ENCODE measurements at regions of chr6 and their contacts with region 1.

Region 1: GRCh38 chr6:88616380-88616779 is 347.0 kb downstream of the RNGTT start:
- DNase-seq: peak; percentile 97
- H3K4me3 ChIP-seq: peak overlapping the region; percentile 63
- H3K27ac ChIP-seq: peak overlapping the region; percentile 95
- H3K4me1 ChIP-seq: peaks cover 88% of the 10 kb centered on the region
- CTCF ChIP-seq: no peak; the same call in 1 of the 2 replicates

Region 2: GRCh38 chr6:87701676-87702588 is 914.4 kb before region 1 on chr6 and contains the start of gene AKIRIN2:
- CTCF ChIA-PET with region 1: no interaction called
- POLR2A ChIA-PET with region 1: interaction called, 6 read pairs
- intact Hi-C with region 1: loop called (anchors 5 kb)
- DNase-seq: peak; percentile 100
- H3K4me3 ChIP-seq: peak within 1 kb of the TSS; percentile 94
- H3K27ac ChIP-seq: peak within 1 kb of the TSS; percentile 89
- H3K4me1 ChIP-seq: peaks cover 50% of the 10 kb centered on the region
- CTCF ChIP-seq: no peak
- total RNA-seq, gene AKIRIN2: 70.3 and 70.4 TPM in 2 replicates

Region 3: DNA sequence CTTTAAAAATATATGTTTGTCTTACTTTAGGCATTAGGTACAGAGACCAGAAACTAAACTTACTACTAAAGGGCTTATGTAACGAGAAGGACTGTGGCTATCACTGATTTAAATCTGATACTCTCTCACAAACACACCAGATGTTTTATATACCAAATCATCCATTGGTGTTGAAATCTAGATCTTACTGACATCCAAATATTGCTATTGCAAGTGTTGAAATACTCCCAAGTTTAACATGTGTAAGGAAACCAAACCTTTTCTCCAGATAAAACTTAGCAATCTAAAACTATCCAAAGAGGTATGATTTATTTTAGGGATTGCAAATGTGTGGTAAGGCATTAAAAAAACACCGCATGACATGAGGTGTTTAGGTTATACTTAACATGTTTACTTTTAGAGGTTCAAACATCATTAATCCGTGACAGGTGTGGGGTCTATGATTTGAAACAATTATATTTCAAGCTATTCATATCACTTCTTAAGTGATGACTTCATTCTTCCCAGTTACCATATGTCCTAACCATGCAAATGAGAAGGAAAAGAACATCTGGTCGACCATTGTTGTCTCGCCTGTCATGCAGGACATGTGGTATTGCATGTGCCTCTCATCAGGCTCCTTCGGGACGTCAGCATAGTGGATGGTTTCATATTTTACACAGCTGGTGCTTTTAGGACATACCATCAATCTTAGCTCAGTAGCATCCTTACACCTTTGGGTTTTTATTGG is 737.1 kb before region 1 on chr6:
- CTCF ChIA-PET with region 1: no interaction called
- POLR2A ChIA-PET with region 1: interaction called, 23 read pairs
- intact Hi-C with region 1: loop called (anchors 1 kb)
- DNase-seq: peak; percentile 100
- H3K4me3 ChIP-seq: peak overlapping the region; percentile 11
- H3K27ac ChIP-seq: peak overlapping the region; percentile 99
- H3K4me1 ChIP-seq: peaks cover 78% of the 10 kb centered on the region
- CTCF ChIP-seq: no peak

Region 4: DNA sequence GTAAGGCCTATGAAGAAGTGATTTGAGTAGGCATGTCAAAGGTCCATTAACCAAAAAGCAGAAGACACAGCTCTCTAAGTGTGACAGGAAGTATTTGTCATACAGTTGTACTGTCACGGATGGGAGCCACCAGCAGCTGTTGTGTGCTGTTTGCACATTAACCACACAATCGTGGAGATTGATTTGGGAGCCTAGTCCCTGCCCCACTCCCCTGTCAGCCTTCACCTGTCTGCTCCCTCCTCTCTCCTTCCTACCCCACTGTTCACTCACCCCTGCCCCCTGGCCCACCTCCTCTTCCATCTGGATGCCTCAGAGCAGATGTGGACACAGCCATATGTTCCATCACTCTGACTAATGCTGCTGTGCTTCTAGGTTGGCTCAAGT is 693.4 kb before region 1 on chr6:
- CTCF ChIA-PET with region 1: no interaction called
- POLR2A ChIA-PET with region 1: interaction called, 50 read pairs
- intact Hi-C with region 1: loop called (anchors 1 kb)
- DNase-seq: peak; percentile 98
- H3K4me3 ChIP-seq: peak overlapping the region; percentile 31
- H3K27ac ChIP-seq: peak overlapping the region; percentile 99
- H3K4me1 ChIP-seq: peaks cover 99% of the 10 kb centered on the region
- CTCF ChIP-seq: no peak

Region 5: GRCh38 chr6:88499845-88500699 is 116.3 kb before region 1 on chr6:
- CTCF ChIA-PET with region 1: no interaction called
- POLR2A ChIA-PET with region 1: interaction called, 5 read pairs
- intact Hi-C with region 1: loop called (anchors 2 kb)
- DNase-seq: peak; percentile 87
- H3K4me3 ChIP-seq: peak overlapping the region; percentile 33
- H3K27ac ChIP-seq: peak overlapping the region; percentile 89
- H3K4me1 ChIP-seq: peaks cover 32% of the 10 kb centered on the region
- CTCF ChIP-seq: no peak

Region 6: DNA sequence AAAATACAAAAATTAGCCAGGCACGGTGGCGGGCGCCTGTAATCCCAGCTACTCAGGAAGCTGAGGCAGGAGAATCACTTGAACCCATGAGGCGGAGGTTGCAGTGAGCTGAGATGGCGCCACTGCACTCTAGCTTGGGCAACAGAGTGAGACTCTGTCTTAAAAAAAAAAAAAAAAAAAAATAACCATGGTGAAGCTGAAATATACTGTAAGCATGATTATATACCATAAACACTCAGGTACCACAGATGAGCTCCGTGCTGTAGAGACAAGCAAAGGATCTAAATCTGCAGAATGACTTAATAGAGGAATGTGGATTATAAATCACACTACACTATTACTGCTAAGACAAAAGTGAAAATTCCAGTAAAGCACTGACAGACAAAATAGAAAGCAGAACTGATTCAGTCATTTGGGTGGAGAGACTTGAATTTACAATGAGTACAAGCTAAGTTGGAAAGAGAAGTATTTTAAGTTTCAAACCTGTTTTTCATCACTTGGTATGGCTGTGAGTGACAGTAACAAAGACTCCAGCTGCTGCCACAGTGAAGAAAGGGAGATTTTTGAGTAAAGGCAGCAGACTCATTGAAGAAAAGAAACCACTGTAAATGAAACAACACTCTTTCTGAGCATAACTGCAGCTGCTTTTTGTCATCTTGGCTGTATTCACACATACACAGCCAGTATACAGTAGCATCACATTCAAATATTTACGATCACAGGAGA is 25.0 kb after region 1 on chr6:
- CTCF ChIA-PET with region 1: no interaction called
- POLR2A ChIA-PET with region 1: interaction called, 28 read pairs
- intact Hi-C with region 1: no loop called
- DNase-seq: peak; percentile 64
- H3K4me3 ChIP-seq: peak overlapping the region; percentile 44
- H3K27ac ChIP-seq: peak overlapping the region; percentile 65
- H3K4me1 ChIP-seq: peaks cover 55% of the 10 kb centered on the region
- CTCF ChIP-seq: no peak; the same call in 1 of the 2 replicates

Region 7: DNA sequence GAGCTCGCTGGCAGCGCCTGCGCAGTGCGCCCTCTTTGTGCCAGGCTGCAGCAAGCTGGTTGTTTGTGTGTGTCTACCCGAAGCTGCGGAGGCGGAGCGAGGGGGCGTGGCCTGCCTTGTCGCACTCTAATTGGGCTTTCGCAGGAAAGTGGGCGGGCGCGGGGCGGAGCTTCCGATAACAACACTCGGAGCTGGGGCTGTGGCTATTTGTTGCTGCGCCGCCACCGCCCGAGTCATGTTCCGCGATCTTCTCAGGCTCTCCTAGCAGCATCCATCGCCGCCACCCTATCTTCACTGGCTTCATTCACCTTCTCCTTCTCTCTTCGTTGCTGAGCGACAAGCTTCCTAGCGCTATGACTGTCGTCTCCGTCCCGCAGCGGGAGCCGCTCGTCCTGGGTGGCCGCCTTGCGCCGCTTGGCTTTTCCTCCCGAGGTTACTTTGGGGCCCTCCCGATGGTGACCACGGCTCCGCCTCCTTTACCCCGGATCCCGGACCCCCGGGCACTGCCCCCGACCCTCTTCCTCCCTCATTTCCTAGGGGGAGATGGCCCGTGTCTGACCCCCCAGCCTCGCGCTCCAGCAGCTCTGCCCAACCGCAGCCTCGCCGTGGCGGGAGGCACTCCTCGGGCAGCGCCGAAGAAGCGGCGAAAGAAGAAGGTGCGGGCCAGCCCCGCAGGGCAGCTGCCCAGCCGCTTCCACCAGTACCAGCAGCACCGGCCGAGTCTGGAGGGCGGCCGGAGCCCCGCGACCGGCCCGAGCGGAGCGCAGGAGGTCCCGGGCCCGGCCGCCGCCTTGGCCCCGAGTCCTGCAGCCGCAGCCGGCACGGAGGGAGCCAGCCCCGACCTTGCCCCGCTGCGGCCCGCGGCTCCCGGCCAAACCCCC is 464.4 kb after region 1 on chr6 and contains the start of gene PNRC1:
- CTCF ChIA-PET with region 1: no interaction called
- POLR2A ChIA-PET with region 1: no interaction called
- intact Hi-C with region 1: loop called (anchors 10 kb)
- DNase-seq: peak; percentile 99
- H3K4me3 ChIP-seq: peak within 1 kb of the TSS; percentile 96
- H3K27ac ChIP-seq: peak within 1 kb of the TSS; percentile 84
- H3K4me1 ChIP-seq: peaks cover 25% of the 10 kb centered on the region
- CTCF ChIP-seq: no peak
- total RNA-seq, gene PNRC1: 22.6 and 26.7 TPM in 2 replicates

Measured in OCI-LY7 (cell line).